T-cell (primary cell): ENCODE measurements at regions of chr2 and their contacts with region 1.

Region 1: GRCh38 chr2:241432824-241433448 is 75.4 kb downstream of the STK25 start:
- DNase-seq: no peak
- ATAC-seq: no peak
- H3K4me3 ChIP-seq: no peak overlapping the region
- H3K4me3 Mint-ChIP-seq: no peak overlapping the region
- H3K27ac ChIP-seq: no peak overlapping the region
- H3K27ac Mint-ChIP-seq: no peak overlapping the region
- H3K4me1 ChIP-seq: no peaks in the 10 kb centered on the region
- H3K4me1 Mint-ChIP-seq: no peaks in the 10 kb centered on the region
- H3K27me3 ChIP-seq: no peaks in the 10 kb centered on the region
- H3K27me3 Mint-ChIP-seq: no peaks in the 10 kb centered on the region

Region 2: DNA sequence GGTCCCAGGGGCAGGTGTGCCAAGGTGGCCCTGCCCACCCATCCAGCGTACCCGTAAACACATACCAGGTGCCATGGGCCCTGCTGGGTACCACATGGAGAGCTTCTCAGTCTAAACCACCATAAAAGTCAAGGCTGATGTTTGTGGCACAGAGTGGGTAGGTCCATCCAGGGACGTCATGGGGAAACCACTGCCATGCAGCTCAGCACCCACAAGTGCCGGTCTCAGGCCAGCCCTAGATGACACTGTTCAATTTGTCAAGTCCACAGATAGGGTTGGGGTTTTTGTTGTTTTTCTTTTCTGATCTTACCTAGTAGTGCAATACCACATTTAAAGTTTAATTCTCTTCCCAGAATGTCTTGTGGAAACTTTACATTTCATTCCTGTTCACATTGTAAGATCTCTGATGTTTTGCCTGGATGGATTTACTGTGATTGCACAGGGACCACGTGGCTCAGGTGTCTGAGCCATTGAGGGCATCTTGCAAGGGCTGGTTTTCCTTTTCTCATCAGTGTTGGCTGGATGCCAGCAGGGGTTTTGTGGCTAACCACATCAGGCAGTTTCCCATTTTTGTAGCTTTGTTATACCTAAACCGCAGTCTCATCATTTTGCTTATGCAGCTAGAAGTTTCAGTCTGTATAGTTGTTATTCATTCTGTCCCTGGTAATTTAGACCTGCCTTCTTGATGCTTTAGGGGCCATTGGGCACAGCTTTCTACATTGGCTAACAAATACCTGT is 10.7 kb after region 1 on chr2:
- CTCF ChIA-PET with region 1: no interaction called
- POLR2A ChIA-PET with region 1: interaction called in 1 of 2 experiments, 10 read pairs
- DNase-seq: peak; percentile 75 to 94 (median 87)
- ATAC-seq: peak; percentile 81 to 93 (median 88)
- H3K4me3 ChIP-seq: no peak overlapping the region
- H3K4me3 Mint-ChIP-seq: peak overlapping the region in 2 of 3 donors; percentile 4 to 55
- H3K27ac ChIP-seq: no peak overlapping the region
- H3K27ac Mint-ChIP-seq: peak overlapping the region; percentile 24 to 49
- H3K4me1 ChIP-seq: peaks cover 13 to 29% of the 10 kb centered on the region in 2 experiments
- H3K4me1 Mint-ChIP-seq: peaks cover 16 to 26% (median 22%) of the 10 kb centered on the region in 3 donors
- H3K27me3 ChIP-seq: peaks cover 17 to 68% of the 10 kb centered on the region in 2 experiments
- H3K27me3 Mint-ChIP-seq: peaks cover 38 to 68% of the 10 kb centered on the region in 2 donors

Region 3: GRCh38 chr2:241489733-241490680 is 57.1 kb after region 1 on chr2:
- CTCF ChIA-PET with region 1: no interaction called
- POLR2A ChIA-PET with region 1: no interaction called
- DNase-seq: no peak
- ATAC-seq: no peak
- H3K4me3 ChIP-seq: no peak overlapping the region
- H3K4me3 Mint-ChIP-seq: no peak overlapping the region
- H3K27ac ChIP-seq: no peak overlapping the region
- H3K27ac Mint-ChIP-seq: no peak overlapping the region
- H3K4me1 ChIP-seq: no peaks in the 10 kb centered on the region
- H3K4me1 Mint-ChIP-seq: no peaks in the 10 kb centered on the region
- H3K27me3 ChIP-seq: no peaks in the 10 kb centered on the region
- H3K27me3 Mint-ChIP-seq: no peaks in the 10 kb centered on the region

Region 4: DNA sequence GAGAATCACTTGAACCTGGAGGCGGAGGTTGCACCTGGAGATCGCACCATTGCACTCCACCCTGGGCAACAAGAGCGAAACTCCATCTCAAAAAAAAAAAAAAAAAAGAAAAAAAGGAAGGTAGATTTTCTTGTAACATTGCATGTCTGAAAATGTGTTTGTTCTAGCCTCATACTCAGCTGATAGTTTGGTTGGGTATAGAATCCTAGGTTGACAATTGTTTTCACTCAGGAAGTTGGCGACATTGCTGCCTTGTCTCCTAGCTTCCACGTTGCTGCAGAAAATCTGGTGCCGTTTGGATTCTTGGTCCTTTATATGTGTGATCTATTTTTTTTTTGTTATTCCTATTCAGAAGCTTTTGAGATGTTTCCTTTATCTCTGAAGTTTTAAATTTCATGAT is 273.6 kb after region 1 on chr2:
- CTCF ChIA-PET with region 1: no interaction called
- POLR2A ChIA-PET with region 1: no interaction called
- DNase-seq: no peak
- ATAC-seq: no peak
- H3K4me3 ChIP-seq: no peak overlapping the region
- H3K4me3 Mint-ChIP-seq: no peak overlapping the region
- H3K27ac ChIP-seq: no peak overlapping the region
- H3K27ac Mint-ChIP-seq: no peak overlapping the region
- H3K4me1 ChIP-seq: peaks cover 4 to 17% of the 10 kb centered on the region in 2 experiments
- H3K4me1 Mint-ChIP-seq: peaks cover 15 to 20% (median 18%) of the 10 kb centered on the region in 3 donors
- H3K27me3 ChIP-seq: no peaks in the 10 kb centered on the region
- H3K27me3 Mint-ChIP-seq: no peaks in the 10 kb centered on the region